Body of pancreas (tissue), 4 donors: ENCODE measurements at regions of chr9 and their contacts with region 1.

Region 1: DNA sequence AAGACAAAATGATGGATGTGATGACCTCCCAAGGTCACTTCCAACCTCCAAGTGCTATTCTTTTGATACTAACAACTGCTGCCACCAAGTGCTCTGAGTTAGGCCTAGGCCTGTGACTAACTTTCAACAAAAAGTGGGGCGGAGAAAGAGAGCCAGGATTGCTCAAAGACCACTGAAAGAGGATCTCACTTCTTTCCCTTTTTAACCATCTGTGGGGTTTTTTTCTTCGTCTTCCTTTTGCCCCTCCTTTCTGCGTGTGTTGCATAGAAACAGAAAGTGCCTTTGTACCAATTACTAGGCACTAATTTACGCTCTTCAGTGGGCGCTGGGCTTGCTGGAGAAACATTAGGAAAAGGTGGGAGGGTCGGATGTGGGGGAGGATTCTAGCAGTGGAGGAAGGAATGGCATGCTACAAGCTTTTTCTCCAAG is 8.0 kb downstream of the KLF9 start:
- DNase-seq: no peak
- ATAC-seq: no peak
- H3K4me3 ChIP-seq: no peak overlapping the region
- H3K27ac ChIP-seq: peak overlapping the region in 3 of 4 donors; percentile 20 to 68 (median 25)
- H3K4me1 ChIP-seq: peaks cover 83% of the 10 kb centered on the region
- H3K27me3 ChIP-seq: no peaks in the 10 kb centered on the region
- CTCF ChIP-seq: no peak
- POLR2A ChIP-seq: peak in 1 of 3 donors; percentile 23

Region 2: GRCh38 chr9:70043689-70044489 is 362.6 kb before region 1 on chr9 and contains the start of gene MAMDC2:
- intact Hi-C with region 1: no loop called
- DNase-seq: peak; percentile 44 to 61 (median 50)
- ATAC-seq: peak; percentile 74
- H3K4me3 ChIP-seq: peak within 1 kb of the TSS; percentile 21 to 36
- H3K27ac ChIP-seq: peak within 1 kb of the TSS in 2 of 4 donors; percentile 18 to 34
- H3K4me1 ChIP-seq: peaks cover 20% of the 10 kb centered on the region
- H3K27me3 ChIP-seq: no peaks in the 10 kb centered on the region
- CTCF ChIP-seq: no peak
- POLR2A ChIP-seq: peak in 1 of 3 donors; percentile 27
- total RNA-seq, gene MAMDC2: 4.0 to 17.1 TPM

Region 3: DNA sequence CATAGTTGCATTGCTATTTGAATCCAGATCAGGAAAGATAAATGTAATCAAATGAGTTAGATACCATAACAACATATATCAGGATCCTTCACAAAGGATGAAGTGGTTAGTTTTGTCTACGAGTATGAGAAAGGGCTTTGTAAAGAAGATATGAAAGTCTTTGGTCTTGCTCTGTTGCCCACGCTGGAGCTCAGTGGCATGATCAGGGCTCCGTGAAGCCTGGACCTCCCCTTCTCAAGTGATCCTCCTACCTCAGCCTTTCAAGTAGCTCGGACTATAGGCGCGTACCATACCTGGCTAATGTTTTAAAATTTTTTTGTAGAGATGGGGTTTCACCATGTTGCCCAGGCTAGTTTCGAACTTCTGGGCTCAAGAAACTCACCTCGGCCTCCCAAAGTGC is 145.8 kb before region 1 on chr9:
- intact Hi-C with region 1: loop called (anchors 5 kb)
- DNase-seq: no peak
- ATAC-seq: no peak
- H3K4me3 ChIP-seq: no peak overlapping the region
- H3K27ac ChIP-seq: peak overlapping the region in 3 of 4 donors; percentile 92 to 96 (median 96)
- H3K4me1 ChIP-seq: peaks cover 66% of the 10 kb centered on the region
- H3K27me3 ChIP-seq: no peaks in the 10 kb centered on the region
- CTCF ChIP-seq: no peak
- POLR2A ChIP-seq: no peak

Region 4: GRCh38 chr9:70340572-70340971 is 65.9 kb before region 1 on chr9:
- intact Hi-C with region 1: loop called (anchors 10 kb)
- DNase-seq: no peak
- ATAC-seq: no peak
- H3K4me3 ChIP-seq: no peak overlapping the region
- H3K27ac ChIP-seq: no peak overlapping the region
- H3K4me1 ChIP-seq: no peaks in the 10 kb centered on the region
- H3K27me3 ChIP-seq: no peaks in the 10 kb centered on the region
- CTCF ChIP-seq: peak in 6 of 7 experiments; percentile 31 to 63 (median 54)
- POLR2A ChIP-seq: no peak

Region 5: GRCh38 chr9:70374962-70375618 is 31.4 kb before region 1 on chr9:
- intact Hi-C with region 1: no loop called
- DNase-seq: no peak
- ATAC-seq: no peak
- H3K4me3 ChIP-seq: no peak overlapping the region
- H3K27ac ChIP-seq: no peak overlapping the region
- H3K4me1 ChIP-seq: no peaks in the 10 kb centered on the region
- H3K27me3 ChIP-seq: no peaks in the 10 kb centered on the region
- CTCF ChIP-seq: no peak
- POLR2A ChIP-seq: no peak

Region 6: GRCh38 chr9:70494221-70494620 is 87.8 kb after region 1 on chr9:
- intact Hi-C with region 1: loop called (anchors 5 kb)
- DNase-seq: peak in 1 of 4 donors; percentile 34
- ATAC-seq: no peak
- H3K4me3 ChIP-seq: no peak overlapping the region
- H3K27ac ChIP-seq: peak overlapping the region in 1 of 4 donors; percentile 37
- H3K4me1 ChIP-seq: no peaks in the 10 kb centered on the region
- H3K27me3 ChIP-seq: no peaks in the 10 kb centered on the region
- CTCF ChIP-seq: no peak
- POLR2A ChIP-seq: no peak